Sciatic nerve (tissue), 2 donors: ENCODE measurements at regions of chr15 and their contacts with region 1.

Region 1: DNA sequence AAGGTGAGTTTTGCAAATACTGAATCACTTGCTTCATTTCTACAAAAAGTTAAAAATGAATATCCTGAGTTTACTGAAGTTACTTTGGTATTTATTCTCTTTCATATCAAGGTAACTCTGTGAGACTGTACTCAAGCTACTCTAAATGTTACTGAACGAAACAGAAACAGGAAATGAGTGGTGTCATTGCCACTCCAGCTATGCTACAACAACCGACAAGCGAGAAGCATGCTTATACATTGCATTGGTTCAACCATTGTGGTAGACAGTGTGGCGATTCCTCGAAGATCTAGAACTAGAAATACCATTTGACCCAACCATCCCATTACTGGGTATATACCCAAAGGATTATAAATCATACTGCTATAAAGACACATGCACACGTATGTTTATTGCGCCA is 313.2 kb upstream of the THBS1 start:
- DNase-seq: no peak
- ATAC-seq: no peak

Region 2: GRCh38 chr15:39232512-39232911 is 35.2 kb before region 1 on chr15:
- intact Hi-C with region 1: no loop called
- DNase-seq: no peak
- ATAC-seq: no peak

Region 3: DNA sequence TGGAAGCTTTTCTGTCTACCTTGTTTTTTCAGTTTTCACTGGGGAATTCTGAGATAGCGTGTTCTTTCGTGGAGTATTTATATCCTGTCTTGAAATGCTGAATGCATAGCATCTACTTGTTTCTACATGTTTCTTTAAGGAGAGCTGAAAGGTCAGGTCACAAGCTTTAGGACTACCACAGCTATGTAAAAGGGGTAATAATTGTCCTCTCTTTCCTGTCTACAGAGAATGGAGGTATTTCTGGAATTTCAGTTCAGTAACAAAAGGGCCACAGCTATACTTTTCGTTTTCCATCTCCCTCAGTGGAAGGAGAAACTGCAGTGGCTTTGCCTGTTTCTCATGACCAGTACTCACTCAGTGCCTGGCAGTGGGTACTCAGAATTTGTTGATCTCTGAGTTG is 1060.5 kb after region 1 on chr15:
- intact Hi-C with region 1: loop called (anchors 5 kb)
- DNase-seq: no peak
- ATAC-seq: no peak